ENCODE measurements at regions of chr9 and their contacts with region 1.

Region 1: GRCh38 chr9:94213511-94214124 is 45.5 kb upstream of the ZNF169 start:
- DNase-seq: peak; percentile 94
- H3K27ac ChIP-seq: no peak overlapping the region
- CTCF ChIP-seq: peak; percentile 97

Region 2: DNA sequence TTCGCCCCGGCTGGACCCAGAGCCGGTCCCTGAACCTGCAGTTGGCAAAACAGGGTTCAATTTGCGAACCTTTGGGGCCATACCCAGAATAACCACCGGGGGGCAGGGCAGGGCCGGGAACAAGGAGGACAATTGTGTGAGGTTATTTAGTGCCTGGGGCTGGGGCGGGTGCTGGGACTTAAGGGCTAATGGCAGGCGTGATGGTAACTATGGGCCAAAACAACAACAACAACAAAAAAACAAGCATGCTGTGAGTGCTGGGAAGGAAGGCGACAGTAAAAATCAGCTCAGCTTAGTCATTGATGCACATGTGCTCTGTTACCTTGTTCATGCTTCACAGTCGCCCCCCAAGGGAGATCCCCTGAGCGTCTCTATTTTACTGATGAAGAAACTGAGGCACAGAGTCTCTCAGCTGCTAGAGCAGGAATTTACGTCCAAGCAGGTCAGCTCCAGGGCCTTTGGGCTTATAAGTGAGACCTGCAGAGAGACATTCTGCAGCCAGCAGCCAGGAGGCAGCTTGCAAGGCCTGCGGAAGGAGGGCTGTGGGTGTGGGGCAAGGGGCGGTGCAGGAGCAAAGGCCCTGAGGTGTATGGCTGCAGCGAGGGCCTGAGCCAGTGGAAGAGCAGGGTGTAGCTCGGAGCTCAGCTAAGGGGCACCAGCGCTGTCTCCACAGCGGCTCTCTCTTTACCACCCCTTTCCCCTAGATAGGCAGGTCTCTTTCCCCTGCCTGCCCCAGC is 531.2 kb before region 1 on chr9:
- CTCF ChIA-PET with region 1: interaction called, 18 read pairs
- POLR2A ChIA-PET with region 1: no interaction called
- DNase-seq: peak; percentile 82
- H3K27ac ChIP-seq: no peak overlapping the region
- CTCF ChIP-seq: peak; percentile 94

Region 3: GRCh38 chr9:94065535-94065961 is 148.1 kb before region 1 on chr9:
- CTCF ChIA-PET with region 1: interaction called, 31 read pairs
- POLR2A ChIA-PET with region 1: no interaction called
- DNase-seq: peak; percentile 67
- H3K27ac ChIP-seq: no peak overlapping the region
- CTCF ChIP-seq: peak; percentile 95